SK-N-SH (cell line): ENCODE measurements at regions of chr11 and their contacts with region 1.

Region 1: GRCh38 chr11:111982019-111982464 is 43.2 kb upstream of the DLAT start:
- DNase-seq: peak; percentile 44
- H3K4me3 ChIP-seq: no peak overlapping the region
- H3K27ac ChIP-seq: no peak overlapping the region
- H3K4me1 ChIP-seq: peaks cover 13 to 16% of the 10 kb centered on the region in 2 experiments; a peak in 3 of 4 replicates
- H3K27me3 ChIP-seq: no peaks in the 10 kb centered on the region
- CTCF ChIP-seq: peak; percentile 67
- EP300 ChIP-seq: no peak
- RAD21 ChIP-seq: peak; percentile 74

Region 2: DNA sequence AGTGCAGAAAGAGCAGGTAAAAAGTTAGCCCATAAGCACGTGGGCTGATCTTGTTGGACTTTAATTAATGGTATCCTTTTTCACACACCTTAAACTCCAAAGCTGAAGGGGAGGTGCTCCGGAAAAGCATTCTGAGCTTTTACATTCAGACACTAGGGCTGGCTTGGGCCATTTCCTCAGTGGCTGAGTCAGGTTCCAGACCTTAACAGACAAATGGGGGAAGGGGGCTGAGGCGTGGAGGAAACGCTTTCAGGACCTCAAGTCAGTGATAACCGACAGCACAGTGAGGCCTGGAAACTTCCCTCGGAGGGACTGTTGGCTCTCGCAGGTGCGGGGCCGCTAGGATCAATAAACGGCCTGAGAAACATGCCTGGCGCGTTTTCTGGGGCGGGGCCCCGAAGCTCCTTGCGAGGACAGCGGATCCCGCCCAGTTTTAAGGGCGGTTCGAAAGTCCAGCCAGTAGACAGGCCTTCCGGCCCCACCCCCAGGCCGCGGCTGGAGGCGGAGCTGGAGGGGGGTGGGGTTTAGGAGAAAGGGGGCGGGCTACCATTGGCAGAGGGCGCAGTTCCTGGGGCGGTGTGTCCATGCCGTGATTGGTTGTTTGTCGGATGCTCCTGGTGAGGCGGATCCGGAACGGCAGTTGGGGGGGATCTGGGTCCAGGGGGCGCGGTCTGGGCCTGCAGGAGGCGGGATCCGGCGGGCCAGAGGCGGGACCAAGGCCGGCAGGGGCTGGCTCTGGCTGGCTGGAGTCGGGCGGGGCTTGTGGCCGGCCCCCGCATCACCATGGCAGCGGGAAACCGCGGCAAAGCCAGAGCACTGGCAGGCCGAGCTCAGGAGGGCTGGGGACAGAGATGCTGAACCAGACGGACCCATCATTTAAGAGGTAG is 55.3 kb before region 1 on chr11:
- CTCF ChIA-PET with region 1: interaction called, 272 read pairs
- POLR2A ChIA-PET with region 1: interaction called, 3 read pairs
- DNase-seq: peak; percentile 97
- H3K4me3 ChIP-seq: peak overlapping the region; percentile 49 to 59
- H3K27ac ChIP-seq: peak overlapping the region; percentile 76 to 84
- H3K4me1 ChIP-seq: peaks cover 7 to 30% of the 10 kb centered on the region in 2 experiments
- H3K27me3 ChIP-seq: no peaks in the 10 kb centered on the region
- CTCF ChIP-seq: 0 out of 2 replicates have a peak, but pooled peaks have one; percentile 9
- EP300 ChIP-seq: no peak
- RAD21 ChIP-seq: no peak

Region 3: GRCh38 chr11:111992206-111992855 is 10.3 kb after region 1 on chr11:
- CTCF ChIA-PET with region 1: interaction called, 17 read pairs
- POLR2A ChIA-PET with region 1: no interaction called
- DNase-seq: no peak
- H3K4me3 ChIP-seq: no peak overlapping the region
- H3K27ac ChIP-seq: peak overlapping the region in 1 of 2 experiments; percentile 7; a peak in 1 of 4 replicates
- H3K4me1 ChIP-seq: peaks cover 7 to 10% of the 10 kb centered on the region in 2 experiments; a peak in 3 of 4 replicates
- H3K27me3 ChIP-seq: no peaks in the 10 kb centered on the region
- CTCF ChIP-seq: no peak
- EP300 ChIP-seq: no peak
- RAD21 ChIP-seq: no peak

Region 4: DNA sequence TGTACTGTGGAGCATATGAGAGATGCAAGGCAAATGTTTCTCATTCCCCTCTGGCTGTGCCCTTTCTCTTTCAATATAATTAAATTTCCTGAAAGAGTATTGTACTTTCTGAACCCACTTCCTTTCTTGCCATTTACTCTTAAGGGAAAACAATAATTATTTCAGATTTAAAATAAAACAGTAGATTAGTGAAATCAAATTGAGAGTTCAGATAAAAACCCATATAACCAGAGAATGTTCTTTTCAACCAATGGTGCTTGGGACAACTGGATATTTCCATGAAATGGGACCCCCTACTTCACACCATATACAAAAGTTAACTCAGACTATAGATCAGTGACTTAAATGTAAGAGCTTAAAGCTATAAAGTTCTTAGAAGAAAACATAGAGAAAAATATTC is 17.1 kb after region 1 on chr11:
- CTCF ChIA-PET with region 1: interaction called, 17 read pairs
- POLR2A ChIA-PET with region 1: interaction called, 3 read pairs
- DNase-seq: no peak
- H3K4me3 ChIP-seq: no peak overlapping the region
- H3K27ac ChIP-seq: no peak overlapping the region
- H3K4me1 ChIP-seq: peaks cover 0 to 9% of the 10 kb centered on the region in 2 experiments; a peak in 1 of 4 replicates
- H3K27me3 ChIP-seq: no peaks in the 10 kb centered on the region
- CTCF ChIP-seq: no peak
- EP300 ChIP-seq: no peak
- RAD21 ChIP-seq: no peak

Region 5: GRCh38 chr11:112057170-112057569 is 75.1 kb after region 1 on chr11:
- CTCF ChIA-PET with region 1: no interaction called
- POLR2A ChIA-PET with region 1: no interaction called
- DNase-seq: no peak
- H3K4me3 ChIP-seq: no peak overlapping the region
- H3K27ac ChIP-seq: no peak overlapping the region
- H3K4me1 ChIP-seq: no peaks in the 10 kb centered on the region
- H3K27me3 ChIP-seq: no peaks in the 10 kb centered on the region
- CTCF ChIP-seq: no peak
- EP300 ChIP-seq: no peak
- RAD21 ChIP-seq: no peak